BJ (cell line): ENCODE measurements at regions of chr6 and their contacts with region 1.

Region 1: GRCh38 chr6:3929281-3929798 is 80.2 kb downstream of the FAM50B start:
- DNase-seq: peak; percentile 97
- H3K4me3 ChIP-seq: no peak overlapping the region
- H3K27me3 ChIP-seq: no peaks in the 10 kb centered on the region
- CTCF ChIP-seq: no peak

Region 2: GRCh38 chr6:3887150-3887700 is 42.1 kb before region 1 on chr6:
- CTCF ChIA-PET with region 1: interaction called, 17 read pairs
- POLR2A ChIA-PET with region 1: no interaction called
- DNase-seq: no peak
- H3K4me3 ChIP-seq: no peak overlapping the region
- H3K27me3 ChIP-seq: no peaks in the 10 kb centered on the region
- CTCF ChIP-seq: peak; percentile 63

Region 3: GRCh38 chr6:3905945-3906845 is 23.1 kb before region 1 on chr6:
- CTCF ChIA-PET with region 1: interaction called, 22 read pairs
- POLR2A ChIA-PET with region 1: interaction called, 16 read pairs
- DNase-seq: no peak
- H3K4me3 ChIP-seq: no peak overlapping the region
- H3K27me3 ChIP-seq: no peaks in the 10 kb centered on the region
- CTCF ChIP-seq: no peak

Region 4: DNA sequence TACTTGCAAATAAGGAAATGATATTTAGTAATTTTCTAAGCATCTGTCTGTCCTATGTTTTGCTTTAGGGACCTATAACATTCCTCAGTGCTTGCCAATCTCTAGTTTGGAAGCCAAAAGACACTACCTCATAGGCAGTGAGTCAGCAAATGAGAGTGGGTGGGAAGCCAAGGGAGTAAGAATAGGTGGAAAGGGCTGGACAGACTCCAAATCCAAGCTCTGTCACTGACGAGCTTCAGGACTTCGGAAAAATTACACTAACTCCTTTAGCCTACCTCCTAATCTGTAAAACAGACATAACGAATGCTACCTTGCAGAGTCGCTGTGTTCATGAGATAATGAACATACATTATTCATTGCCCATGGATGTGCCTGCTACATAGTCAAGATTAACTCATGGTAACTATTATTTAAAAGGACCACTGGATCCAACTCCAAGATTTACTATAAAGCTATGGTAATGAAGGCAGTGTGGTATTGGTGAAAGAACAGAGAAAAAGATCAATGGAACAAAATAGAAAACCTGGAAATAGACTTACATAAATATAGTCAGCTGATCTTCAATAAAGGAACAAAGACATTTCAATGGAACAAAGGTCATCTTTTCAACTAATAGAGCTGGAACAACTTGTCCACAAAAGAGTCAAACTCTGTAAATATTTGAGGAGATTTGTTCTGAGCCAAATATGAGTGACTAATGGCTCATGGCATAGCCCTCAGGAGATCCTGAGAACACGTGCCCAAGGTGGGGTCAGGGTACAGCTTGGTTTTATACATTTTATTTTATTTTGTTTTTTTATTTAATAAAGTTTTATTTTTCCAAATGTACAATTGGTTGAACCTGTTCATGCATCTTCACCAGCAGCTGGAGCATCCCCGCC is 16.0 kb before region 1 on chr6:
- CTCF ChIA-PET with region 1: interaction called, 22 read pairs
- POLR2A ChIA-PET with region 1: interaction called, 6 read pairs
- DNase-seq: peak; percentile 98
- H3K4me3 ChIP-seq: no peak overlapping the region
- H3K27me3 ChIP-seq: no peaks in the 10 kb centered on the region
- CTCF ChIP-seq: no peak

Region 5: GRCh38 chr6:3958255-3958654 is 28.9 kb after region 1 on chr6:
- CTCF ChIA-PET with region 1: no interaction called
- POLR2A ChIA-PET with region 1: no interaction called
- DNase-seq: no peak
- H3K4me3 ChIP-seq: no peak overlapping the region
- H3K27me3 ChIP-seq: no peaks in the 10 kb centered on the region
- CTCF ChIP-seq: no peak